ENCODE measurements at regions of chr11 and their contacts with region 1.

Region 1: DNA sequence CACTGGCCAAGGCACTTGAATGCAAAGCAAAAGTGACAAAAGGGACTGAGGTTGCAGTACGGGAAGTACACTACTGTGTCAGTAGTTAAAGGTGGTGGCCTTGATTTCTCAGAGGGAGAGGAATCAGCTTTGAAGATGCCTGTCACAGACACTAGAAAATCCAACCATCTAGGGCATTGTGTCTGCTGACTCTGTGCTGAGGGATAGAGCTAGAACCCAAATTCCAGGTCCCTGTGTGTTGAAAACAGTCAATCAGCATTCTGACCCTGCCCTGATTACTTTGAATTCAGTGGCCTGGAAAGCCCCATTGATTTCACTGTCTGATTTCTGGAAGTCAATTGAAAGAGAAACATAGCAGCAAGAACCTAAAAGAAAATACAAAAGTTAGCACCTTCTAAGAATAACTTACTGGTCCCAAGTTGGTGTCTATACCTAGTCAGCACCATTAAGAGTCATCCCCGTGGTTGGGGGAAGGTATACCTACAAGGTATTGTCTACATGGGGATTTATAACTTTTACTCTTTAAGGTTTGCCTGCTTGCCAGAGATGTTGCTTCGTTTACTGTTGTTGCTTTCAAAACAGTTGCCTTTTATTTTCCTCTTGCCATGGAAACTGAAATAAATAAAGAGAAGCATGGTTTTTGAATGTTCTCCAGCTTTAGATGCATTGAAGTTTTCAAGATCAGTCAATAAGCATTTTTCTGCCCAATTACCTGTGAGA is 97.3 kb downstream of the PDHX start:
- DNase-seq: peak; percentile 53
- H3K4me3 Mint-ChIP-seq: peak overlapping the region; percentile 58
- H3K27ac Mint-ChIP-seq: peak overlapping the region; percentile 92
- H3K4me1 Mint-ChIP-seq: peaks cover 44% of the 10 kb centered on the region
- H3K27me3 Mint-ChIP-seq: peaks cover 4% of the 10 kb centered on the region

Region 2: GRCh38 chr11:34997952-34998528 is 15.6 kb before region 1 on chr11:
- CTCF ChIA-PET with region 1: interaction called, 3 read pairs
- POLR2A ChIA-PET with region 1: interaction called, 3 read pairs
- intact Hi-C with region 1: loop called (anchors 1 kb)
- DNase-seq: no peak
- H3K4me3 Mint-ChIP-seq: peak overlapping the region; percentile 7
- H3K27ac Mint-ChIP-seq: peak overlapping the region; percentile 25
- H3K4me1 Mint-ChIP-seq: peaks cover 19% of the 10 kb centered on the region
- H3K27me3 Mint-ChIP-seq: no peaks in the 10 kb centered on the region

Region 3: GRCh38 chr11:35040221-35040942 is 26.7 kb after region 1 on chr11:
- CTCF ChIA-PET with region 1: interaction called, 3 read pairs
- POLR2A ChIA-PET with region 1: interaction called, 16 read pairs
- intact Hi-C with region 1: loop called (anchors 1 kb)
- DNase-seq: peak; percentile 79
- H3K4me3 Mint-ChIP-seq: peak overlapping the region; percentile 79
- H3K27ac Mint-ChIP-seq: peak overlapping the region; percentile 94
- H3K4me1 Mint-ChIP-seq: peaks cover 74% of the 10 kb centered on the region
- H3K27me3 Mint-ChIP-seq: peaks cover 1% of the 10 kb centered on the region

Region 4: DNA sequence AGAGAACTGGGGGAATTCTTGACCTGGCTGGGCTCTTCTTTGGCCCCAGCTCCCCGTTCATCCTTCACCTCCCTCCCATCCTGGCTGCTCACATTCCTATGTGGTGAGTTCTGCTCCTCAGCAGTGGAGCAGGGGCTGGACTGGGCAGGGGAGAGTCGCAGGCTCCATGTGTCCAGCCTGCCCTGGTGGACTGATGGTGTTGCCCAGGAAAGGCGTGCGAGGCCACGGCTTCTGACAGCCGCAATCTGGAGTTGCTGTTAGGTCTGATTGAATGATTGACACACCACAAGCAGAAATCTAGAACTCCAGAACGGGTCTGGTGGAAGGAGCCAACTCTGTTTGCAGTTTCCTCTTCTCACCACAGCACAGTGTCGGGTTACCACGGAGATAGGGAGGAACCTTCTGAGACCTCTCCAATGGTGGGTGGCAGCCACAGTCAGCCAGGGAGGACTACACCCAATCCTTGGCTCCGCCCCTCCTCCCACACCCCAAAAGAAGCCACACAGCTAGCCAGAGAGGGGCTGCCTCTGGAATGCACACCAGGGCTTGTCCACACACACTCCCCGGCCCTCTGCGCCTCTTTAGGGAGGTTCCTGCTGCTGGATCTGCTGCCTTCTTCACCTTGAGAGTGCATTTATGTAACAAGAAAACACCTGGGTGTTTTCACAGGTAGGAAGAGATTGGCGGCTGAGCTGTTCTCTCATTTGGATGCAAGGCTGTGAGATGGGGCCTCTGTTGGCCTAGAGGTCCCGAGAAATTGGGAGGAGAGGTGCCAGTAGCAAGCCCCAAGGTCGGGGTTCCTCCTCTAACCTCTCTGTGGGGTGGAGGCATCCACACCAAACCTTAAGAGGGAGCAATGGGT is 68.9 kb after region 1 on chr11:
- CTCF ChIA-PET with region 1: no interaction called
- POLR2A ChIA-PET with region 1: no interaction called
- intact Hi-C with region 1: loop called (anchors 1 kb)
- DNase-seq: peak; percentile 90
- H3K4me3 Mint-ChIP-seq: peak overlapping the region; percentile 62
- H3K27ac Mint-ChIP-seq: peak overlapping the region; percentile 81
- H3K4me1 Mint-ChIP-seq: peaks cover 93% of the 10 kb centered on the region
- H3K27me3 Mint-ChIP-seq: no peaks in the 10 kb centered on the region

Region 5: GRCh38 chr11:35173011-35173511 is 159.4 kb after region 1 on chr11:
- CTCF ChIA-PET with region 1: no interaction called
- POLR2A ChIA-PET with region 1: no interaction called
- intact Hi-C with region 1: loop called (anchors 1 kb)
- DNase-seq: no peak
- H3K4me3 Mint-ChIP-seq: peak overlapping the region; percentile 40
- H3K27ac Mint-ChIP-seq: peak overlapping the region; percentile 82
- H3K4me1 Mint-ChIP-seq: peaks cover 95% of the 10 kb centered on the region
- H3K27me3 Mint-ChIP-seq: no peaks in the 10 kb centered on the region

Region 6: GRCh38 chr11:35257281-35257680 is 243.6 kb after region 1 on chr11:
- CTCF ChIA-PET with region 1: no interaction called
- POLR2A ChIA-PET with region 1: no interaction called
- intact Hi-C with region 1: no loop called
- DNase-seq: no peak
- H3K4me3 Mint-ChIP-seq: no peak overlapping the region
- H3K27ac Mint-ChIP-seq: no peak overlapping the region
- H3K4me1 Mint-ChIP-seq: peaks cover 22% of the 10 kb centered on the region
- H3K27me3 Mint-ChIP-seq: peaks cover 2% of the 10 kb centered on the region